ENCODE measurements at regions of chr4 and their contacts with region 1.

Region 1: GRCh38 chr4:27010334-27010940 is 149.8 kb downstream of the STIM2 start:
- DNase-seq: peak; percentile 43
- ATAC-seq: peak; percentile 90
- H3K4me3 ChIP-seq: no peak overlapping the region
- H3K27ac ChIP-seq: no peak overlapping the region
- H3K4me1 ChIP-seq: peaks cover 0 to 1% of the 10 kb centered on the region in 2 experiments; a peak in 1 of 4 replicates
- H3K27me3 ChIP-seq: no peaks in the 10 kb centered on the region
- CTCF ChIP-seq: peak; percentile 50 to 81 (median 77)
- POLR2A ChIP-seq: no peak
- RAD21 ChIP-seq: peak; percentile 85

Region 2: GRCh38 chr4:26459054-26459755 is 551.2 kb before region 1 on chr4:
- CTCF ChIA-PET with region 1: no interaction called
- POLR2A ChIA-PET with region 1: no interaction called
- RAD21 ChIA-PET with region 1: no interaction called
- intact Hi-C with region 1: loop called (anchors 10 kb)
- DNase-seq: peak; percentile 61
- ATAC-seq: peak; percentile 85
- H3K4me3 ChIP-seq: peak overlapping the region; percentile 32 to 46
- H3K27ac ChIP-seq: no peak overlapping the region
- H3K4me1 ChIP-seq: peaks cover 0 to 15% of the 10 kb centered on the region in 2 experiments; a peak in 2 of 4 replicates
- H3K27me3 ChIP-seq: no peaks in the 10 kb centered on the region
- CTCF ChIP-seq: peak; percentile 62 to 72 (median 63); a peak in 5 of 6 replicates
- POLR2A ChIP-seq: no peak
- RAD21 ChIP-seq: peak; percentile 84

Region 3: GRCh38 chr4:26860157-26860921 is 150.1 kb before region 1 on chr4 and contains the start of gene STIM2:
- CTCF ChIA-PET with region 1: no interaction called
- POLR2A ChIA-PET with region 1: no interaction called
- RAD21 ChIA-PET with region 1: interaction called in 1 of 2 experiments, 4 read pairs
- intact Hi-C with region 1: loop called (anchors 5 kb)
- DNase-seq: peak; percentile 93
- ATAC-seq: peak; percentile 78
- H3K4me3 ChIP-seq: peak within 1 kb of the TSS; percentile 94 to 96
- H3K27ac ChIP-seq: peak within 1 kb of the TSS; percentile 88
- H3K4me1 ChIP-seq: peaks cover 17 to 36% of the 10 kb centered on the region in 2 experiments
- H3K27me3 ChIP-seq: no peaks in the 10 kb centered on the region
- CTCF ChIP-seq: peak in 1 of 3 experiments; percentile 37; a peak in 2 of 6 replicates
- POLR2A ChIP-seq: peak; percentile 49
- RAD21 ChIP-seq: no peak
- total RNA-seq, gene STIM2: 65.9 TPM

Measured in HCT116 (cell line).